ENCODE measurements at regions of chr7 and their contacts with region 1.

Region 1: GRCh38 chr7:155405399-155406318 is 52.3 kb upstream of the EN2 start:
- DNase-seq: peak; percentile 70
- H3K4me3 ChIP-seq: no peak overlapping the region
- H3K27ac ChIP-seq: no peak overlapping the region
- H3K4me1 ChIP-seq: no peaks in the 10 kb centered on the region
- H3K27me3 ChIP-seq: peaks cover 78% of the 10 kb centered on the region
- CTCF ChIP-seq: peak; percentile 28; the same call in 1 of the 2 replicates
- EP300 ChIP-seq: no peak
- RAD21 ChIP-seq: peak; percentile 23; the same call in 1 of the 2 replicates

Region 2: DNA sequence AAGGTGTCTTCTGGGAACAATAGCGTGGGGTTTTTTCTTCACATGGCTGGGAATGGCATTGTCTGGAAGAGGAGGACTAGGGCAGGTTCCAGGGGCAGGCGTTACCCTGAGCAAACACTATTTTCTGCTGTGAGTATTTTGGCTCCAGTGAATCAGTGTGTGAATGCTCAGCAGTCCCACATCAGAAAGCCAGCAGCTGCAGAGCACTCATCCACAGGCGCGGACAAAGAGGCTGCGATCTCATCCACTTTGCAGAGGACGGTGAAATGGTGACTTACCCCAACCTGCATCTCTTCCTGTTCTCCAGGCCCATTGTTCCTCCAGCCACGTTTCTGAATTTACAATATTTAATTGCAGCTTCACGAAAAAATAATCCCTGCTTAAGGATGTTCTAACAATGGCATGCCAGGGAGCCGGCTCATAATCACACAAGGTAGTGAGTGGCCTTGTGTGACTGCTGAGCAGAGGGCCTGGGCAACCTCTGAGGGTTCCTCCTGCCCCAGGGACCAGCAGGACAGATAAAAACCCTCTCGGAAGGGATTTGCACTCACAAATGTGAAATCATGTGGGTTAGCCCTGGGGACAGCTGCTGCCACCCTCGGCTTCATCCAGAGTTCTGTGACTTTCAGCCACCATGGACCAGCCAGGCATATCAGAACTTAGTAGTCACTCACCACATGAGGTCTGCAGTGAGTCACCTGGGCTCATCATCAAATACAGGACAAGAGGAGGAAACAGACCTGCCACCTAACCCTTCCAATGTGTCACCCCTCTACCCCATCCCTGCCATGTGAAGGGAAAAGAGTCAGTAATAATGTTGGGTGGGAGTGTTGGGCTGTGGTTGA is 12.7 kb before region 1 on chr7:
- CTCF ChIA-PET with region 1: interaction called, 13 read pairs
- POLR2A ChIA-PET with region 1: no interaction called
- DNase-seq: no peak
- H3K4me3 ChIP-seq: no peak overlapping the region
- H3K27ac ChIP-seq: no peak overlapping the region
- H3K4me1 ChIP-seq: peaks cover 0 to 7% of the 10 kb centered on the region in 2 experiments; a peak in 1 of 4 replicates
- H3K27me3 ChIP-seq: peaks cover 95% of the 10 kb centered on the region
- CTCF ChIP-seq: no peak
- EP300 ChIP-seq: no peak
- RAD21 ChIP-seq: no peak